ENCODE measurements at regions of chr9 and their contacts with region 1.

Region 1: GRCh38 chr9:93095205-93096130 is 549 bp upstream of the CARD19 start:
- DNase-seq: peak; percentile 99 to 100 (median 99)
- H3K4me3 ChIP-seq: peak overlapping the region; percentile 26 to 98 (median 44)
- H3K4me3 Mint-ChIP-seq: peak overlapping the region; percentile 84 to 91
- H3K27ac ChIP-seq: peak overlapping the region; percentile 97 to 100
- H3K27ac Mint-ChIP-seq: peak overlapping the region; percentile 99 to 100 (median 100)
- H3K4me1 ChIP-seq: peaks cover 74 to 80% of the 10 kb centered on the region in 2 donors
- H3K4me1 Mint-ChIP-seq: peaks cover 72% of the 10 kb centered on the region
- H3K27me3 ChIP-seq: no peaks in the 10 kb centered on the region
- H3K27me3 Mint-ChIP-seq: peaks cover 0 to 2% (median 0%) of the 10 kb centered on the region in 3 donors
- CTCF ChIP-seq: no peak

Region 2: DNA sequence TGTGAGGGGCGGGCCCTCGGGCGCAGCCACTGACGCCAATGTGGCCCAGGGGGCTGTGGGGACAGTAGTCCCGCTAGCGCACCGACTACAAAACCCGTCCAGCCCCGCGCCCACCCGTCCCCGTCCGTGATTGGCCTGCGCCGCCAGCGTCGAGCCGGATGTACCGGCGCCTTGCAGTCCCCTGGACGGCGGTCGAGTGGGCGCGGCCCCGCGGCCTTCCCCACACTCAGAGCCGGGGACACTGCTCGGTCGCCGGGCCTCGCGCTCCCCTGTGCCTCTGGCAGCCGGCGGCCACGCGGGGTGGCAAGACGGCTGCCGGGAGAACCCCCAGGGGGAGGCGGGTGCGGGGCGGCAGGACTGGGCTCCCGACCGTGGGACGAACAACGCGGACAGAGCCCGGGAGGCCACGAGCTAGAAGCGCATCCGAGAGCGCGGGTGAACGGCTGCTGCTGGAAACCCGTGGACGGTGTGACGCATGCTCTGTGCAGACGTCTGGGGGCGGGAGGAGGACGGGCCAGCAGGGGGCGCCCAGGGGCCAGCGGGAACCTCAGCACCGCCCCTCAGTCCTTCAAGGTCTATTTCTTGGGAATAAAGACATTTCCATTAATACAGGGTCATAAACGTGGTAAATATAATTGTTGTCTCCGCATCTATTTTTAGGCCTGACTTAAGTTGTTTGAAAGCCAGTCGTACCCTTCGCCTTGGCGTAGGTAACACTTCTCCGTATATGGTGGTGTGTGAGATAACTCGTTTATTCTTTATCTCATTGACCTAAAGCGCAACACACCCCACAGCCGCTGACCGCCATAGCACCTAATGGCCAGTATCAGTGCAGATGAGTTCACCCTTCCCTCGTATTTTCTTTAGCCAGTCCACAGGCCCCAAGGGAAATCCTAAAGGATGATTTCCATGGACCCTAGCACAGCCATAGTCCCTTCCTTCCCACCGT is 330.2 kb before region 1 on chr9:
- intact Hi-C with region 1: loop called (anchors 10 kb)
- DNase-seq: peak; percentile 93 to 97 (median 96)
- H3K4me3 ChIP-seq: peak overlapping the region; percentile 63 to 77 (median 73)
- H3K4me3 Mint-ChIP-seq: peak overlapping the region; percentile 91 to 92
- H3K27ac ChIP-seq: peak overlapping the region; percentile 93 to 94
- H3K27ac Mint-ChIP-seq: peak overlapping the region; percentile 91 to 98 (median 97)
- H3K4me1 ChIP-seq: peaks cover 61% of the 10 kb centered on the region in 2 donors
- H3K4me1 Mint-ChIP-seq: peaks cover 63% of the 10 kb centered on the region
- H3K27me3 ChIP-seq: no peaks in the 10 kb centered on the region
- H3K27me3 Mint-ChIP-seq: peaks cover 0 to 4% (median 0%) of the 10 kb centered on the region in 3 donors
- CTCF ChIP-seq: peak; percentile 99

Region 3: GRCh38 chr9:92870289-92870688 is 225.2 kb before region 1 on chr9:
- intact Hi-C with region 1: no loop called
- DNase-seq: no peak
- H3K4me3 ChIP-seq: no peak overlapping the region
- H3K4me3 Mint-ChIP-seq: no peak overlapping the region
- H3K27ac ChIP-seq: no peak overlapping the region
- H3K27ac Mint-ChIP-seq: peak overlapping the region in 1 of 7 donors; percentile 46
- H3K4me1 ChIP-seq: no peaks in the 10 kb centered on the region
- H3K4me1 Mint-ChIP-seq: peaks cover under 1% of the 10 kb centered on the region
- H3K27me3 ChIP-seq: no peaks in the 10 kb centered on the region
- H3K27me3 Mint-ChIP-seq: no peaks in the 10 kb centered on the region
- CTCF ChIP-seq: no peak

Region 4: GRCh38 chr9:93037476-93037971 is 57.9 kb before region 1 on chr9:
- intact Hi-C with region 1: loop called in 1 of 2 experiments (anchors 5 kb)
- DNase-seq: peak; percentile 68 to 78 (median 71)
- H3K4me3 ChIP-seq: peak overlapping the region in 1 of 3 experiments; percentile 50
- H3K4me3 Mint-ChIP-seq: peak overlapping the region in 1 of 2 donors; percentile 30
- H3K27ac ChIP-seq: peak overlapping the region; percentile 66 to 79
- H3K27ac Mint-ChIP-seq: peak overlapping the region; percentile 72 to 92 (median 88)
- H3K4me1 ChIP-seq: peaks cover 80 to 98% of the 10 kb centered on the region in 2 donors
- H3K4me1 Mint-ChIP-seq: peaks cover 90% of the 10 kb centered on the region
- H3K27me3 ChIP-seq: no peaks in the 10 kb centered on the region
- H3K27me3 Mint-ChIP-seq: no peaks in the 10 kb centered on the region
- CTCF ChIP-seq: no peak

Region 5: DNA sequence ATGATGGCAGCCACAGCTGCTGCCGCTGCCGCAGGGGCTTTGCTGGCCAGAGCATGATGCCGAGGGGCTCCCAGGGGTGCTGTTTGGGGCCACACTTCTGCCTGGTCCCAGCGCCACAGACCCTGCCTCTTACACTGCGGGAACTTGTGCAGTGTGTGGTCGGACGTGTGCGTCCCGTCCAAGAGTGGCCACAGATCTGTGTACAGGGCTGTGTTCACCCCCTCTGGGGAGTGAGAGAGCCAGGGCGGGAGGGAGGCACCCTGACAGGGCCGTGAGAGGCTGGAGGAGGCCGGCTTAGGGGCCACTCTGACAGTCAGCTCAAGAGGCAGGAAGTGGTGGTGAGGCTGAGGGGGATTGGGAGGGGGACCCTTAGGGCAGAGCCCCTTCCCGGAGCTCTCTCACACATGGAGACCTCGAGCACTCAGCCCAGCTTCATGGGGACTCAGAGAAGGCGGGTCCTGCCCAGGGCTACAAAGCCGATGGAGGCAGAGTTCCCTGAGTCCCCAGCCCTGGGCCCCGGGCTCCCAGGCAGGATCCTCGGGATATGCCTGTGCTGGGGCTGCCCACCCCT is 12.5 kb before region 1 on chr9:
- intact Hi-C with region 1: no loop called
- DNase-seq: no peak
- H3K4me3 ChIP-seq: peak overlapping the region in 1 of 3 experiments; percentile 25
- H3K4me3 Mint-ChIP-seq: peak overlapping the region in 1 of 2 donors; percentile 59
- H3K27ac ChIP-seq: peak overlapping the region in 1 of 2 donors; percentile 45
- H3K27ac Mint-ChIP-seq: peak overlapping the region in 2 of 7 donors; percentile 7 to 19
- H3K4me1 ChIP-seq: peaks cover 16 to 23% of the 10 kb centered on the region in 2 donors
- H3K4me1 Mint-ChIP-seq: peaks cover 22% of the 10 kb centered on the region
- H3K27me3 ChIP-seq: no peaks in the 10 kb centered on the region
- H3K27me3 Mint-ChIP-seq: peaks cover 0 to 4% (median 0%) of the 10 kb centered on the region in 3 donors
- CTCF ChIP-seq: no peak

Region 6: DNA sequence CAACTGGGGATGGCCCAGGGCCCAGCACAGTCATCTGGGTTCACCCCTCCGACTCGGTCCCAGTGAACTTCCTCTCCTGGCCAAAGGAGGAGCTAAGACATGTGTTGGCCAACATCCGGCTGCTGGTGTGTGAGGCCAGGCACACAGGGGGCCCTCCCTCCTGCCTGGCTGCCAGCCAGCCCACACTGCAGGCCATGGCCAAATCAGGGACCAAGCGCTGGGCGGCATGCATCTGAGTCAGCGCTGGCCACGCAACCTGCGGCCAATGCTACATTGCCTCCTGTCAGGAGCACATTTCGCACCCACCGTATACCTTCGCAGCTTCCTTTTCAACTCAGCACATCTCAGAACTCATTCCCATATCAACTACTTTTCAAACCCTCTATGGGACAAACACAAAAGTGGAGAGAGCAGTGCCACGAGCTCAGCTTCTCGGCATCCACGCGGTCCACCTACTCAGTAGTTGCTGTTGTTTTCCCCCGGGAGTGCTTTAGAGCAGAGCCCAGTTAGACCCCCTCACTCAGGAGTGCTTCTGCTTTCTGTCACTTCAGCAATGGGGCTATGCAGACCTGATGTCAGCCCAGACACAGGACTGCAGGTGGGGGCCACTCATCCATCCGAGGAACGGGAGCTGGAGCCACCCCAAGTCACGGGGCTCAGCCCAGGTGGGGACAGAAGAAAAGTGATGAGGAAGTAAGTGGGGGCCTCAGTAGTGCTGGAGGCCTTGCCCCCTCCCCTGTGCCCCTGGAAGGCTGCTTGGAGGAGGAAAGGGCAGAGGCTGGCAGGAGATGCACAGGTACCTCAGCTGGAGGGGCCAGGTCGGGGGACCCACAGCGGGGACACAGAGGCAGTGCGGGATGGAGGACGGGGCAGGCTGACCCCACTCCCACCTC is 24.7 kb after region 1 on chr9:
- intact Hi-C with region 1: loop called in 1 of 2 experiments (anchors 2 kb)
- DNase-seq: peak; percentile 99
- H3K4me3 ChIP-seq: peak overlapping the region in 1 of 3 experiments; percentile 49
- H3K4me3 Mint-ChIP-seq: peak overlapping the region; percentile 52 to 81
- H3K27ac ChIP-seq: peak overlapping the region; percentile 90 to 99
- H3K27ac Mint-ChIP-seq: peak overlapping the region; percentile 99 to 100 (median 100)
- H3K4me1 ChIP-seq: peaks cover 68 to 83% of the 10 kb centered on the region in 2 donors
- H3K4me1 Mint-ChIP-seq: peaks cover 65% of the 10 kb centered on the region
- H3K27me3 ChIP-seq: no peaks in the 10 kb centered on the region
- H3K27me3 Mint-ChIP-seq: peaks cover 0 to 2% (median 0%) of the 10 kb centered on the region in 3 donors
- CTCF ChIP-seq: peak; percentile 24

Region 7: GRCh38 chr9:93453047-93453914 is 357.8 kb after region 1 on chr9 and contains the start of gene FAM120AOS:
- intact Hi-C with region 1: loop called (anchors 10 kb)
- DNase-seq: peak; percentile 82 to 90 (median 90)
- H3K4me3 ChIP-seq: peak within 1 kb of the TSS; percentile 74 to 95 (median 79)
- H3K4me3 Mint-ChIP-seq: peak within 1 kb of the TSS; percentile 95 to 99
- H3K27ac ChIP-seq: peak within 1 kb of the TSS; percentile 87 to 90
- H3K27ac Mint-ChIP-seq: peak within 1 kb of the TSS; percentile 91 to 99 (median 96)
- H3K4me1 ChIP-seq: peaks cover 50 to 65% of the 10 kb centered on the region in 2 donors
- H3K4me1 Mint-ChIP-seq: peaks cover 52% of the 10 kb centered on the region
- H3K27me3 ChIP-seq: no peaks in the 10 kb centered on the region
- H3K27me3 Mint-ChIP-seq: no peaks in the 10 kb centered on the region
- CTCF ChIP-seq: no peak
- polyA plus RNA-seq, gene FAM120AOS: 33.2 to 47.7 (median 41.6) TPM

Region 8: GRCh38 chr9:93566408-93567270 is 471.2 kb after region 1 on chr9:
- intact Hi-C with region 1: loop called in 1 of 2 experiments (anchors 10 kb)
- DNase-seq: peak; percentile 96
- H3K4me3 ChIP-seq: peak overlapping the region; percentile 59 to 75 (median 65)
- H3K4me3 Mint-ChIP-seq: peak overlapping the region; percentile 79 to 90
- H3K27ac ChIP-seq: peak overlapping the region; percentile 91 to 99
- H3K27ac Mint-ChIP-seq: peak overlapping the region; percentile 90 to 96 (median 96)
- H3K4me1 ChIP-seq: peaks cover 30 to 34% of the 10 kb centered on the region in 2 donors
- H3K4me1 Mint-ChIP-seq: peaks cover 29% of the 10 kb centered on the region
- H3K27me3 ChIP-seq: no peaks in the 10 kb centered on the region
- H3K27me3 Mint-ChIP-seq: peaks cover 0 to 2% (median 1%) of the 10 kb centered on the region in 3 donors
- CTCF ChIP-seq: peak; percentile 92